ENCODE measurements at regions of chr4 and their contacts with region 1.

Region 1: DNA sequence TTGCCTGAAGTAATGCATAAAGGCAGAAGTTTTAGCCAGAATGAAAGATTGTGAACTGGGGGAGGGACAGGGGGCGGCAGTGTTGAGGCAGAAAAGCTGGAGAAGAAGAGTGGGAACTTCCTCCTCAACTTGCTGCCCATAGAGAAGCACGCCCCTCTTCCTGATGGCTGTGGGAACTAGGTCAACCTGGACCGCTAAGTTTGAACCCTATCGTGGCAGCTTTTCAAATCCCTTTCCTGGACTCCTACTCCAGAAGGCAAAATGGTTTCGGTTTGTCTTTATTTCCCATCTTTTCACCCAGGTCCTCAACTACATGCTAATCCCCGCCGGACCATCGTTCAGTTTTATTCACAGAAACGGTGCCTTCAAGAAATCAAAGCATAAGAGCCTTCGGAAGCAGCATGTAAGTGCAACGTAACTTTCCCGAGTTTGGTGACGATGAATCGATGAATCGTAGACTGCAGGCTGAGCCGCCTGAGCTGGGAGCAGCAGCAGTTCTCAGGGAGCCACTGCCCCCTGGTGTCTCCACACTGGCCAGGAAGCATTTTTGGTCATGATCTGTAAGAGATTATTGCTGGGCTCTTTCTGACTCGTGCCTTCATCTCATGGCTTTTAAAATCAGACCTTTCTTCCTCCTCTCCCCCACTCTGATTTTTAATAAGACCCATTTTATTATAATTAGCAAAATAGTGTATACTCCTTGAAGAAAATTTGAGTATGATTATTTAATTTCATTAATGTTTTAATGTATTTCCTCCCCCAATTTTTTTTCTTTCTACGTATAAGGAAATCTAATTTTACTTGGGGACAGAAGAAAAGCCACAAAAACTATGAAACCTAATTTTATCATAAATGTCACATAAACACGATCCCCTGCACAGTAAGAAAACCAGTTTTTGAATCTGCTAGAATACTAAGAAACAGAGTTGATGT is 21.4 kb downstream of the SPINK2 start:
- DNase-seq: peak; percentile 83
- H3K4me3 Mint-ChIP-seq: peak overlapping the region; percentile 84
- H3K27ac Mint-ChIP-seq: peak overlapping the region; percentile 81
- H3K4me1 Mint-ChIP-seq: no peaks in the 10 kb centered on the region
- H3K27me3 Mint-ChIP-seq: no peaks in the 10 kb centered on the region
- CTCF ChIP-seq: peak; percentile 87

Region 2: DNA sequence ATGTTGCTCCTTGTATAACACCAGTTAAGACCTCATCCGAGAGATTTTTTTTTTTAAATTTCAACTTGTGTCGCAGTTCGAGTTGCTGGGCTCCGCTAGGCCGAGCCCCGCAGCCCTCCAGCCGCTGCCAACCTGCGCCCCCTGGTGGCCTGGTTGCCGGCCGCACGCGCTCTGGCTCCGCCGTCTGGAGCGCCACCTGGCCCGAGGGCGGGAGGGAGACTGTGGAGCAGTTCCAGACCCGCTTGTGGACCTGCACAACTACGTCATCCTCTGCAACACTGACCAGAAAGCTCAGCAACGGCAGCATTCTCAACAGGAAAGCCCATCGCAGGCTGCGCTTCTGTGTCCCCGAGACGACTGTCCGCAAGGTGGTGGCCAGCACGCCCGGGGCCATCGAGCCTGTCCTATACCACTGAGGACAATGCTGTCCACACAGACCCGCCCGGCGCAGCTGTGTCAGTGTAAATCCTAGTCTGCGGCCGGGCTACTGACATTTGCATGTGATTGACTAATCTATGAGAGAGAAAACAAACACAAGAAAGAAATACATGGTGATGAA is 255.4 kb before region 1 on chr4:
- CTCF ChIA-PET with region 1: interaction called, 6 read pairs
- POLR2A ChIA-PET with region 1: no interaction called
- intact Hi-C with region 1: loop called (anchors 1 kb)
- DNase-seq: peak; percentile 77
- H3K4me3 Mint-ChIP-seq: peak overlapping the region; percentile 75
- H3K27ac Mint-ChIP-seq: no peak overlapping the region
- H3K4me1 Mint-ChIP-seq: peaks cover 5% of the 10 kb centered on the region
- H3K27me3 Mint-ChIP-seq: no peaks in the 10 kb centered on the region
- CTCF ChIP-seq: peak; percentile 96

Region 3: GRCh38 chr4:56575820-56576429 is 224.2 kb before region 1 on chr4:
- CTCF ChIA-PET with region 1: interaction called, 25 read pairs
- POLR2A ChIA-PET with region 1: interaction called, 4 read pairs
- intact Hi-C with region 1: loop called (anchors 1 kb)
- DNase-seq: peak; percentile 45
- H3K4me3 Mint-ChIP-seq: no peak overlapping the region
- H3K27ac Mint-ChIP-seq: no peak overlapping the region
- H3K4me1 Mint-ChIP-seq: no peaks in the 10 kb centered on the region
- H3K27me3 Mint-ChIP-seq: no peaks in the 10 kb centered on the region
- CTCF ChIP-seq: peak; percentile 36

Region 4: GRCh38 chr4:56668298-56668697 is 131.8 kb before region 1 on chr4:
- CTCF ChIA-PET with region 1: interaction called, 5 read pairs
- POLR2A ChIA-PET with region 1: interaction called, 3 read pairs
- intact Hi-C with region 1: loop called (anchors 1 kb)
- DNase-seq: peak; percentile 55
- H3K4me3 Mint-ChIP-seq: no peak overlapping the region
- H3K27ac Mint-ChIP-seq: no peak overlapping the region
- H3K4me1 Mint-ChIP-seq: peaks cover 5% of the 10 kb centered on the region
- H3K27me3 Mint-ChIP-seq: no peaks in the 10 kb centered on the region
- CTCF ChIP-seq: peak; percentile 48

Region 5: GRCh38 chr4:56723201-56723605 is 76.9 kb before region 1 on chr4:
- CTCF ChIA-PET with region 1: no interaction called
- POLR2A ChIA-PET with region 1: no interaction called
- intact Hi-C with region 1: no loop called
- DNase-seq: peak; percentile 13
- H3K4me3 Mint-ChIP-seq: no peak overlapping the region
- H3K27ac Mint-ChIP-seq: peak overlapping the region; percentile 39
- H3K4me1 Mint-ChIP-seq: peaks cover 32% of the 10 kb centered on the region
- H3K27me3 Mint-ChIP-seq: no peaks in the 10 kb centered on the region
- CTCF ChIP-seq: no peak